Panc1 (cell line): ENCODE measurements at regions of chrX and their contacts with region 1.

Region 1: DNA sequence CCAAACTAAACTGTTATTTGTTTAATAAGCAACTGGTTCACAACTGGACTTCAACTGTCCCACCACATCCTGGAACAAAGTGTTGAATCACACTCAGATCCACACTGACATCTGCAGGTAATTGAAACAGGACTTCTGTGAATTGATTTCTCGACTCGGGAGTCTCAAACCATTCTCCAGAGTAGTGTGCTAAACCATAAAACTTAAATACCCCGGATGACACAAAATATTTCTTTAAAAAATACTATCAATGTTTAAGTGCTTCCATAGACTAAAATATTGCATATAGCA is 95.4 kb upstream of the PLAC1 start:
- DNase-seq: peak; percentile 42
- ATAC-seq: peak; percentile 62
- H3K4me3 ChIP-seq: no peak overlapping the region
- H3K27ac ChIP-seq: no peak overlapping the region
- H3K4me1 ChIP-seq: no peaks in the 10 kb centered on the region
- H3K27me3 ChIP-seq: no peaks in the 10 kb centered on the region
- CTCF ChIP-seq: peak; percentile 52; the same call in 1 of the 2 replicates

Region 2: GRCh38 chrX:134484039-134484438 is 269.6 kb before region 1 on chrX:
- CTCF ChIA-PET with region 1: interaction called, 3 read pairs
- POLR2A ChIA-PET with region 1: no interaction called
- in situ Hi-C with region 1: no loop called
- intact Hi-C with region 1: loop called (anchors 2 kb)
- DNase-seq: peak; percentile 43
- ATAC-seq: peak; percentile 34; the same call in 1 of the 2 replicates
- H3K4me3 ChIP-seq: no peak overlapping the region
- H3K27ac ChIP-seq: no peak overlapping the region
- H3K4me1 ChIP-seq: no peaks in the 10 kb centered on the region
- H3K27me3 ChIP-seq: no peaks in the 10 kb centered on the region
- CTCF ChIP-seq: peak; percentile 71

Region 3: GRCh38 chrX:134520860-134521390 is 232.7 kb before region 1 on chrX:
- CTCF ChIA-PET with region 1: interaction called, 9 read pairs
- POLR2A ChIA-PET with region 1: no interaction called
- in situ Hi-C with region 1: no loop called
- intact Hi-C with region 1: loop called (anchors 2 kb)
- DNase-seq: no peak
- ATAC-seq: peak; percentile 96
- H3K4me3 ChIP-seq: no peak overlapping the region
- H3K27ac ChIP-seq: no peak overlapping the region
- H3K4me1 ChIP-seq: no peaks in the 10 kb centered on the region
- H3K27me3 ChIP-seq: no peaks in the 10 kb centered on the region
- CTCF ChIP-seq: peak; percentile 83

Region 4: GRCh38 chrX:134613396-134613795 is 140.3 kb before region 1 on chrX:
- CTCF ChIA-PET with region 1: no interaction called
- POLR2A ChIA-PET with region 1: no interaction called
- in situ Hi-C with region 1: no loop called
- intact Hi-C with region 1: no loop called
- DNase-seq: no peak
- ATAC-seq: no peak
- H3K4me3 ChIP-seq: no peak overlapping the region
- H3K27ac ChIP-seq: no peak overlapping the region
- H3K4me1 ChIP-seq: no peaks in the 10 kb centered on the region
- H3K27me3 ChIP-seq: no peaks in the 10 kb centered on the region
- CTCF ChIP-seq: no peak